ENCODE measurements at regions of chr15 and their contacts with region 1.

Region 1: GRCh38 chr15:47890409-47891150 is 173.3 kb downstream of the SEMA6D start:
- DNase-seq: no peak
- ATAC-seq: no peak
- H3K4me3 ChIP-seq: no peak overlapping the region
- H3K27ac ChIP-seq: no peak overlapping the region
- H3K4me1 ChIP-seq: no peaks in the 10 kb centered on the region
- H3K27me3 ChIP-seq: peaks cover 0 to 9% (median 0%) of the 10 kb centered on the region in 7 donors
- CTCF ChIP-seq: no peak

Region 2: DNA sequence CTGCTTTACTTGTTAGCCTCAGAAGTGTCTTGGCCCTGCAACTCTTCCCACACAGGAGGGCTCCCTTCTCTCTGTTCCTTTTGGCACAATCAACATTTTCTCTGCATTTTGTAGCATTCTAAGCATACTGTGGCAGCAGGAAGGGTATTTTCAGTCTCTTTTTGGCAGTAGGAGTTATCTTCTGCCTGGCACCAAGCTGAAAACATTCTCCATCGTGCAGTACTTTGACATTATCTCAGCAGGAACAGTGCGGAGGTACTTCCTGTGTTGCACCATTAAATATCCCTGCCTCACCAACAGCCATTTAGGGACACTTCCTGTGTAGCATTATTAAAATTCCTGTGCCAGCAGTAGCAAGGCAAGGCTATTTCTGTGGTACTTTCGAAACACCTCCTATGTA is 406.5 kb before region 1 on chr15:
- intact Hi-C with region 1: loop called in 1 of 10 experiments (anchors 10 kb)
- DNase-seq: no peak
- ATAC-seq: peak in 1 of 8 donors; percentile 35
- H3K4me3 ChIP-seq: no peak overlapping the region
- H3K27ac ChIP-seq: no peak overlapping the region
- H3K4me1 ChIP-seq: peaks cover 0 to 4% (median 0%) of the 10 kb centered on the region in 9 donors
- H3K27me3 ChIP-seq: no peaks in the 10 kb centered on the region
- CTCF ChIP-seq: no peak

Region 3: GRCh38 chr15:47812436-47813109 is 78.0 kb before region 1 on chr15:
- intact Hi-C with region 1: no loop called
- DNase-seq: no peak
- ATAC-seq: no peak
- H3K4me3 ChIP-seq: no peak overlapping the region
- H3K27ac ChIP-seq: no peak overlapping the region
- H3K4me1 ChIP-seq: no peaks in the 10 kb centered on the region
- H3K27me3 ChIP-seq: no peaks in the 10 kb centered on the region
- CTCF ChIP-seq: no peak